OCI-LY7 (cell line): ENCODE measurements at regions of chr1 and their contacts with region 1.

Region 1: DNA sequence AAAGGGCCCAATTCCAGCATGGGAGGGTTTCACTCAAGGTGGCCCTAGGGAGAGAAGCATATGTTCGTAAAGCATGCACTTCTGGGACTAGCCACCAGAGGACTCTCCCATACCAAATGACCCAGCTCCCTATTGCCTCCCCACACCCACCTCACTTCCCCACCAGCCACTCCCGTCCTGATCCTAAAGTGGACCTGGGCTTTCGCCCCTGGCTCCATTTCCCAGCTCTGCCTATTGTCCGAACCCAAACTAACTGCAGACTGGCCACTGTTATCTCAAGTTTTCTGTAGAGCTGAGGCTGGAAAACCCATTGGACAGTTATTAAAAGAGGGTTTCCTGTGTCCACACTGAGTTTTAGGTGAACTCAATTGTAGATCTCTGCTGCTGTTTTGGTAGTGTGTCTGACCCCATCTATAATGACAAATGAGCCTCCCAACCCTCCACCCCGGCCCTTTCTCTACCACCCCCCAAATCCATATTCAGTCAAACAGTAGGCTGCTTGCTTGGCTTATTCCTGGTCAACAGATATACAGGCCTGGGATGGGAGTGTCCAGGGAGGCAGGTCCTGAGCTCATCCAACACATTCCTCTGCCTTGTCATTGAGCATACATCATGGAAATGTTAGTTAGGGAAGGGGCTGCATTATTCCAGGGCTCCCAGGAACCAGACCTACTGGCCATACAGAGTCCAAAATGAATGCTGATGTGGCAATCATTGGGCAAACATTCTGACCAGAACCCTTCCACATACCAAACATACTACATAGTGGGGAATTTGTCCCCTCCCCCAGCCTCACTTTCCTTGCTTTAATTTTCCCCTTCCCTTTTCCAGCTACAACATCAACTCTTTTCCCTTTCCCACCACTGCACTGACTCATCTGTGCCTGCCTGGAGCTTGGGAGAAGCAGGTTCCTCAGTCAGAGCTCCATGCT is 59.2 kb downstream of the ABCA4 start:
- DNase-seq: peak; percentile 44
- H3K4me3 ChIP-seq: no peak overlapping the region
- H3K27ac ChIP-seq: no peak overlapping the region
- H3K4me1 ChIP-seq: no peaks in the 10 kb centered on the region
- CTCF ChIP-seq: peak; percentile 82

Region 2: GRCh38 chr1:93597709-93598108 is 464.1 kb before region 1 on chr1:
- CTCF ChIA-PET with region 1: no interaction called
- POLR2A ChIA-PET with region 1: no interaction called
- intact Hi-C with region 1: no loop called
- DNase-seq: no peak
- H3K4me3 ChIP-seq: no peak overlapping the region
- H3K27ac ChIP-seq: no peak overlapping the region
- H3K4me1 ChIP-seq: no peaks in the 10 kb centered on the region
- CTCF ChIP-seq: no peak

Region 3: DNA sequence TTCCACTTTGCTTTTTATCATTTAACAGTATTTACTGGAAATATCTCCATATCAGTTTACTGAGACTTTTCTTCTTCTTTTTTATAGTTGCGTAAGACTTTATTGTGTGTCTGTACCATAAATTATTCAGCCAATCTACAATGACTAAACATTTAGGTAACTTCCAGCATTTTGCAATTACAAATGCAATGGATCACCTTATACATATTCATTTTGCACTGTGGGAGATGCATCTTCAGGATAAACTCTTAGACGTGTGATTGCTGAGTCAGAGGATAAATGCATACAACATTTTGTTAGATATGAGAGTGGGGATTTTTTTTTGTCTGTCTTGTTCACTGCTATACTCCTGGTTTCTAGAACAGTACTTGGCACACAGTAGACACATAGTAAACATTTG is 56.9 kb before region 1 on chr1:
- CTCF ChIA-PET with region 1: no interaction called
- POLR2A ChIA-PET with region 1: no interaction called
- intact Hi-C with region 1: no loop called
- DNase-seq: no peak
- H3K4me3 ChIP-seq: no peak overlapping the region
- H3K27ac ChIP-seq: no peak overlapping the region
- H3K4me1 ChIP-seq: no peaks in the 10 kb centered on the region
- CTCF ChIP-seq: no peak

Region 4: GRCh38 chr1:94240822-94241221 is 179.0 kb after region 1 on chr1:
- CTCF ChIA-PET with region 1: no interaction called
- POLR2A ChIA-PET with region 1: no interaction called
- intact Hi-C with region 1: loop called (anchors 5 kb)
- DNase-seq: peak; percentile 3
- H3K4me3 ChIP-seq: no peak overlapping the region
- H3K27ac ChIP-seq: no peak overlapping the region
- H3K4me1 ChIP-seq: peaks cover 6% of the 10 kb centered on the region
- CTCF ChIP-seq: peak; percentile 73

Region 5: DNA sequence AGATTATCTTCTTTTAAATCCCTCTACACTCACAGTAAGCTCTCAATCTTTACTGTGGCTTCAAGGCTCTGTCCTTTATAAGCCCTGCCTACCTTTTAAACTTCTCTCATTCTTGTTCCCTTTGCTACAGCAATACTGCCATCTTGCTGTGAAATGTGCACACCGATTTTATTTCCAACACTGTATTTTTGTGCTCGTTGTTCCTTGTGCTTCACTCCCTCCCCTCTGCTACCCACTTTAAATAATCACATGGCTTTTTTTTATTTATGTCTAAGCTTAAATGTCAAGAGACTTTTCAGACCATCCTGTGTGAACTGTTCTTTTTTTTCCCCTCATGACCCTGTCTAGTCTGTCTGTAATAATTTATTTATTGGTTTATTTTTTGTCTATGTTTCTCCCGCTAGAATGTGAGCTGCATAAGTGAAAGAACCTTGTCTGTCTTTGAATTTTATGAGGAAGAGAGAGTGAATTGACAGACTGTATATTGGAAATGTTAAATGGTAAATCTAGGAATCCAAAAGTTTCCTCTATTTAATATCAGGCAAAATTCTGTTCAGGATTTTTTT is 402.1 kb after region 1 on chr1:
- CTCF ChIA-PET with region 1: interaction called, 3 read pairs
- POLR2A ChIA-PET with region 1: no interaction called
- intact Hi-C with region 1: loop called (anchors 1 kb)
- DNase-seq: peak; percentile 56
- H3K4me3 ChIP-seq: no peak overlapping the region
- H3K27ac ChIP-seq: no peak overlapping the region
- H3K4me1 ChIP-seq: peaks cover 12% of the 10 kb centered on the region
- CTCF ChIP-seq: peak; percentile 87

Region 6: DNA sequence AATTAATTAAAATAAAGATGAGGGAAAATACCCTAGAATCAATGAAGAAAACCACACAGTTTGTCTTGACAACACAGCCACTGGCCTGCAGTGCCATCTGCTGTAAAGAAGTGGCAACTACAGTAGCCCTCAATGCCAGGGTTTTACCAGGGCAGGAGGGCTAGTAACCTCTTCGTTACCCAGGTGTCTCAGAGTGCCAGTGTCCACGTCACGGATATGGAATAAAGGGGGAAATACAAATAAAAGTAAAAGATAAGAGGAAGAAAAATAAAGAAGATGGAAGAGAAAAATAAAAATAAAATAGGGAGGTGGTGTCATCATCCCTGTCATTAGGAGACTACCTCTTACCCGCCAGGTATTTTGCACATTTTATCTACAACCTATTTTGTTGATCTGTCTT is 744.1 kb after region 1 on chr1:
- CTCF ChIA-PET with region 1: no interaction called
- POLR2A ChIA-PET with region 1: no interaction called
- intact Hi-C with region 1: loop called (anchors 5 kb)
- DNase-seq: peak; percentile 64
- H3K4me3 ChIP-seq: no peak overlapping the region
- H3K27ac ChIP-seq: no peak overlapping the region
- H3K4me1 ChIP-seq: no peaks in the 10 kb centered on the region
- CTCF ChIP-seq: peak; percentile 93